ENCODE measurements at regions of chr14 and their contacts with region 1.

Region 1: DNA sequence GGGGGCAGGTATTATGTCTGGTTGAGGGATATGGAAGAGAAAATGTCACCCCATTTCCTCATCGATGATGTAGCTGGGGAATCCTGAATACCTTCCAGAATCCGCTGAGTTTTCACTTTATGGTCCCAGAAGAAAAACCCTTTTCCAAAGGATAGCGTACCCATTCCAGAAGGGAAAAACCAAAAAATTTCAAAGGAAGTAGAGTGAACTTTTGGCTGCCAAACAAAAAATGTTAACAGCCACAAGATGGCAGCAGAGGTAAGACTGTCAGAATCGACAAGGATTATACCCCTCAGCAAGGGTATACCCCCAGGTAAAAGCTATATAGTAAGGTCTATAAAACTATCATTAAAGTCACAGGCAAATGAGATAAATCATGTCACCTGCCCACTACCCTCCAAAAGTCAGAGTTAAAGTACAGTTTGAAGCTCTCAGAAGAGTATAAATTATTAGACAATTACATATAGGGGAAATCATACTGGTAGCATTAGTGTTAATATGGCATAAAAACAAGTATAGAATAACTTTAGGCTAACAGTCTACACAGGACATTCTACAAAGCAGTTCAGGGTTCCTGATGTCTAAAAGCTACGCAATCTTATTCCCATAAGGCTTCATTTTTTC is 18.0 kb downstream of the ACIN1 start:
- DNase-seq: no peak
- H3K27ac ChIP-seq: no peak overlapping the region
- CTCF ChIP-seq: peak; percentile 81

Region 2: GRCh38 chr14:23095196-23096108 is 18.6 kb after region 1 on chr14 and contains the start of gene C14orf119:
- CTCF ChIA-PET with region 1: interaction called, 15 read pairs
- POLR2A ChIA-PET with region 1: interaction called, 4 read pairs
- DNase-seq: peak; percentile 100
- H3K27ac ChIP-seq: peak within 1 kb of the TSS; percentile 96
- CTCF ChIP-seq: no peak

Region 3: DNA sequence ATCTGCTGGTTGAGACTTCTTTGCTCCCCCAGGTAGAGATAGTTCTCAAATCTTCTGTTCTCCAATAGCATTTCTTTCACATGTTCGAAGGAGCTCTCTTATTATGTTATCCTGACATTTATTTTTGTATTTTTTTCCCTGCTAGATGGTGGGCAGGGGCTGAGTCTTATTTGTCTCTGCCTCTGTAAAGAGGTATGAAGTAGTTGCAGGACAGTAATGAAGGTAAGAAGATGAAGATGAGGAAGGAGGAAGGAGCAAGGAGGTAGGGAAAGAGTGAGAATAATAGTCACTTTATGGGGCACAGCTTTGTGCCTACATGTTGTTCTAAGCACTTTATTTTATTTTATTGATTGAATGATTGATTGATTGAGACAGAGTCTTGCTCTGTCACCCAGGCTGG is 32.9 kb after region 1 on chr14:
- CTCF ChIA-PET with region 1: interaction called, 13 read pairs
- POLR2A ChIA-PET with region 1: no interaction called
- DNase-seq: no peak
- H3K27ac ChIP-seq: no peak overlapping the region
- CTCF ChIP-seq: no peak